ENCODE measurements at regions of chr5 and their contacts with region 1.

Region 1: DNA sequence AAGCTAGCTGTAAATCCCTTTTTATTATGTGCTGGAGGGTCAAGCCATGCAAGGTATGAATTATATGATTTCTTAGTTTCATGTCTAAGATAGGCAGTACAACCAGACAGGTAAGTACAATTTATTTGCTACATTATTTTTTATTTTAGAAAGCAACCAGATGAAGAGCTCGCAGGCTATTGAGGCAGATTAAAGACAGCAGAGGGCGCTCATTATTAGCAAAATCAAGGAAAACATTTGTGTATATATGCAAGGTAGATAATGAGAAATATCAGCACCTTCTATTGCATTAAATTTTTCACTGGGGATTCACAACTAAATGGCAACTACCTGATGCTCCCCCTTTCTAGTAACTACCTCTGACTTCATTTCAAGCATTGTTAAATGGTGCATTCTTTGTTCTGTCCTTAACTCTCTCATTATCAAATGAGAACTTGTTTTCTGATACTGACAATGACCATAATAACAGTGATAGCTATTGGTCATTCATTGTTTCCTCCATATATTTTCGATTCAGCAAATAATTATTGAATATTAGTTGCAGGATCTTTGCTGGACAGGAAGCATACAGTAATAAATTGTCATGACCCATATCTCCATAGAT is 8.6 kb downstream of the SCGB3A2 start:
- DNase-seq: peak; percentile 27 to 40
- H3K4me3 ChIP-seq: no peak overlapping the region
- H3K27ac ChIP-seq: no peak overlapping the region
- H3K4me1 ChIP-seq: peaks cover 26% of the 10 kb centered on the region
- H3K27me3 ChIP-seq: no peaks in the 10 kb centered on the region
- CTCF ChIP-seq: peak; percentile 82

Region 2: DNA sequence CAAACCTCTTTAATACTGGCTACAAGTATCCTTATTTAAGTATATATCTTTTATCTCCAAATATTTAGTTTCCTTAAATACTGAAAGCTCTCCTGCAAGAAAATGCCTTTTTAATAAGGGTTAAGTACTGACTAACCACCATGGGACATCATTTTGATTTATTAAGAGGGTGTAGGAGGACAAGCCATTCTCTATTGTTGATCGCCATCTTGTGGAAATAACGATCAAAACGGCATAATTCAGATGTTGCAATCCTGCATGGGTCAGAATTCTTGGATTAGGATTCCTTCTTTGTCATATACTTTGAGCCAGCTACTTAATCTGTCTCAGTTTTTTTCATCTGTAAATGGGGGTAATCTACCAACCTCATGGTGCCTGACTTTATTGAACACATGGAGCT is 47.9 kb after region 1 on chr5:
- CTCF ChIA-PET with region 1: no interaction called
- POLR2A ChIA-PET with region 1: no interaction called
- intact Hi-C with region 1: loop called (anchors 1 kb)
- DNase-seq: peak; percentile 26 to 54
- H3K4me3 ChIP-seq: no peak overlapping the region
- H3K27ac ChIP-seq: no peak overlapping the region
- H3K4me1 ChIP-seq: no peaks in the 10 kb centered on the region
- H3K27me3 ChIP-seq: no peaks in the 10 kb centered on the region
- CTCF ChIP-seq: peak; percentile 81

Region 3: DNA sequence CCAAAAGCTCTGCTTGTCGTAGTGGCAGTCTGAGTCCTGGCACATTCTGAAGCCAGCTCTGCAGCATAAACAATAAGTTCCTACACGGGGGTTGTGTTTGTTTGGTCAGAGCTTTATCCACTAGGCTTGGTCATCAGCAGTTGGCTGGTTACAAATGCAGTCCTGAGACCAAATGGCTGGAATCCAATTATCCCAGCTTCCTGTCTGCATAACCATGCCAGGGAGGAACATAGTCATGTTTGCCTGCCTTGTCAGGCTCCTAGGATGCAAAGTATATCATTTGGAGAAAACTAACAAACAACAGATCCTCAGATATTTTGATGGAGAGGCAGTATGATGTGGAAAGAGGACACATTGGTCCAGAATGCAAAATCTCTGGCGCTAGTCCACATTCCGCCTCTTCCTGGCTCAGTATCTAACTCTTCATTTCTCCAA is 582.4 kb after region 1 on chr5:
- CTCF ChIA-PET with region 1: no interaction called
- POLR2A ChIA-PET with region 1: no interaction called
- intact Hi-C with region 1: no loop called
- DNase-seq: no peak
- H3K4me3 ChIP-seq: no peak overlapping the region
- H3K27ac ChIP-seq: no peak overlapping the region
- H3K4me1 ChIP-seq: no peaks in the 10 kb centered on the region
- H3K27me3 ChIP-seq: no peaks in the 10 kb centered on the region
- CTCF ChIP-seq: no peak

Measured in PC-9 (cell line).